Activated naive CD4-positive, alpha-beta T cell treated with anti-CD3 and anti-CD28 coated beads for 36 hours (primary cell): ENCODE measurements at regions of chr15 and their contacts with region 1.

Region 1: GRCh38 chr15:63232405-63232804 is 43.0 kb downstream of the RAB8B start:
- DNase-seq: no peak
- H3K4me3 Mint-ChIP-seq: no peak overlapping the region
- H3K27ac Mint-ChIP-seq: peak overlapping the region; percentile 52
- H3K4me1 Mint-ChIP-seq: peaks cover 81% of the 10 kb centered on the region
- H3K27me3 Mint-ChIP-seq: no peaks in the 10 kb centered on the region

Region 2: GRCh38 chr15:62046078-62046743 is 1186.2 kb before region 1 on chr15:
- CTCF ChIA-PET with region 1: no interaction called
- intact Hi-C with region 1: no loop called
- DNase-seq: no peak
- H3K4me3 Mint-ChIP-seq: peak overlapping the region; percentile 5
- H3K27ac Mint-ChIP-seq: peak overlapping the region; percentile 0
- H3K4me1 Mint-ChIP-seq: peaks cover 24% of the 10 kb centered on the region
- H3K27me3 Mint-ChIP-seq: no peaks in the 10 kb centered on the region

Region 3: DNA sequence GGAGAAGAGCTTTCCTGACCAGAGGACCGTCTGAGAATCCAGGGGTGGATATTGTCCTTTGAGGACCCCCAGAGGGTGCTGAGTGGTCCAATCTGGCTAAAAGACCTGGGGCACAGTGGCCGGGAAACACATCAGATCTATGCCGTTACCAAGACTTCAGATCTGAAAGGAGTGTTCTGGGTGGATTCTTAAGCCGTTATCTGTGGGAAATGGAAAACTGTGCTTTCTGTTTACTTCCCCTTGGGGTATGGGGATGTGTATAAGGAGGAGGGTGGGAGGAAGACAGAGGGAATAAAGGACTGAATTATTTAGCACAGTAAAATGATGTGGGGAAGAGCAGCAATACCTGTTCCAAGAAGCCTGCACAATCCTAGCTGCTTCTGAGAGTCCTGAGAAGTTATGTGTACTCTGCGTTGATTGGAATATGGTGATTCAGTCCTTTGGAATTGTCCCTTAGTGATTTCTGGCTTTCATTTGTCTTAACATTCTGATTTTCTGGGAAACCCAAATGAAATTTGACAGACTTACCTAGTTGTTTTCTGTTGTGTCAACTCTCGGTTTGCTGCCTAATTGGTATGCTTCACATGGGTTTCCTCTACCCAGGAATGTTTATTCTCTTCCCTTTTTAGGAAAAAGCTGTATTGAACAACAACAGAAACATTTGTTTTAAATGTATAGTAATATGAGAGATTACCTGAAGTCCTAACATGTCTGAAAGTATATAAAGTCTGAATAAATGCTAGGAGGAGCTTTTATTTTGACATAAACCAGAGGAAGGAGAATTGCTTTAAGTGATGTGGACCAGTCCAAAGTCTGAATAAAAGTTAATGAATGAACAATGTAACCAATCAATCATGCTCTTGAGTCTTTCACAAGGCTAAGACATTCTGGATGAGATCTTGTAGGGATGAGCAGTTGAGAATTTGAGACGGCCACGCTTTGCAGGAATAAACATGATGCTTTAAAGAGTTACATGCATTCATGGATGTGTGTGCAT is 640.3 kb before region 1 on chr15:
- CTCF ChIA-PET with region 1: no interaction called
- intact Hi-C with region 1: no loop called
- DNase-seq: no peak
- H3K4me3 Mint-ChIP-seq: no peak overlapping the region
- H3K27ac Mint-ChIP-seq: no peak overlapping the region
- H3K4me1 Mint-ChIP-seq: no peaks in the 10 kb centered on the region
- H3K27me3 Mint-ChIP-seq: peaks cover 20% of the 10 kb centered on the region

Region 4: GRCh38 chr15:63041974-63042819 is 190.2 kb before region 1 on chr15 and contains the start of gene TPM1:
- CTCF ChIA-PET with region 1: no interaction called
- intact Hi-C with region 1: no loop called
- DNase-seq: peak; percentile 11
- H3K4me3 Mint-ChIP-seq: peak within 1 kb of the TSS; percentile 47
- H3K27ac Mint-ChIP-seq: no peak within 1 kb of the TSS
- H3K4me1 Mint-ChIP-seq: peaks cover 9% of the 10 kb centered on the region
- H3K27me3 Mint-ChIP-seq: peaks cover 50% of the 10 kb centered on the region
- total RNA-seq, gene TPM1: 10.5 to 10.7 TPM

Region 5: GRCh38 chr15:63172376-63173109 is 59.9 kb before region 1 on chr15:
- CTCF ChIA-PET with region 1: no interaction called
- intact Hi-C with region 1: loop called (anchors 1 kb)
- DNase-seq: no peak
- H3K4me3 Mint-ChIP-seq: no peak overlapping the region
- H3K27ac Mint-ChIP-seq: no peak overlapping the region
- H3K4me1 Mint-ChIP-seq: peaks cover 14% of the 10 kb centered on the region
- H3K27me3 Mint-ChIP-seq: no peaks in the 10 kb centered on the region

Region 6: DNA sequence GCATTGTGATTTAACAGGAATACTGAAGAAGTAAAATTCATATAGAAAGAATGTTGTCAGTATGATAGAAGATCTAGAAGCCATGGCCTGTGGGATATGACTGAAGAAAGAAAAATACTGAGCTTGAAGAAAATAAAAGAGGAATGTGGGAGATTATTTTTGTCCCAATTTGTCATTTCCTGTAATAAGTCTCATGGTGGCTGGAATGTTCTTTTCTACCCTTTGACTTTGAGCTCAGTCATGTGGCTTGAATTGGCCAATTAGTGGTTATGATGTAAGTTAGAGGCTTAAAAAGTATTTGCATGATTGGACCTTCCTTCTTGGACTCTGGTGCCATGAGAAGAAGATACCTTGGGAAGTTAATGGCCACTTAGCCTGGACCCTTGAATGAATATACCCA is 59.1 kb after region 1 on chr15:
- CTCF ChIA-PET with region 1: no interaction called
- intact Hi-C with region 1: no loop called
- DNase-seq: no peak
- H3K4me3 Mint-ChIP-seq: no peak overlapping the region
- H3K27ac Mint-ChIP-seq: no peak overlapping the region
- H3K4me1 Mint-ChIP-seq: peaks cover 4% of the 10 kb centered on the region
- H3K27me3 Mint-ChIP-seq: no peaks in the 10 kb centered on the region